AG04450 (cell line): ENCODE measurements at regions of chr5 and their contacts with region 1.

Region 1: GRCh38 chr5:64214132-64214531 is 48.5 kb downstream of the RNF180 start:
- DNase-seq: no peak
- H3K4me3 ChIP-seq: no peak overlapping the region
- H3K27ac ChIP-seq: no peak overlapping the region
- H3K27me3 ChIP-seq: no peaks in the 10 kb centered on the region
- CTCF ChIP-seq: no peak

Region 2: GRCh38 chr5:64201996-64202395 is 12.1 kb before region 1 on chr5:
- CTCF ChIA-PET with region 1: no interaction called
- POLR2A ChIA-PET with region 1: no interaction called
- DNase-seq: no peak
- H3K4me3 ChIP-seq: no peak overlapping the region
- H3K27ac ChIP-seq: no peak overlapping the region
- H3K27me3 ChIP-seq: no peaks in the 10 kb centered on the region
- CTCF ChIP-seq: no peak

Region 3: DNA sequence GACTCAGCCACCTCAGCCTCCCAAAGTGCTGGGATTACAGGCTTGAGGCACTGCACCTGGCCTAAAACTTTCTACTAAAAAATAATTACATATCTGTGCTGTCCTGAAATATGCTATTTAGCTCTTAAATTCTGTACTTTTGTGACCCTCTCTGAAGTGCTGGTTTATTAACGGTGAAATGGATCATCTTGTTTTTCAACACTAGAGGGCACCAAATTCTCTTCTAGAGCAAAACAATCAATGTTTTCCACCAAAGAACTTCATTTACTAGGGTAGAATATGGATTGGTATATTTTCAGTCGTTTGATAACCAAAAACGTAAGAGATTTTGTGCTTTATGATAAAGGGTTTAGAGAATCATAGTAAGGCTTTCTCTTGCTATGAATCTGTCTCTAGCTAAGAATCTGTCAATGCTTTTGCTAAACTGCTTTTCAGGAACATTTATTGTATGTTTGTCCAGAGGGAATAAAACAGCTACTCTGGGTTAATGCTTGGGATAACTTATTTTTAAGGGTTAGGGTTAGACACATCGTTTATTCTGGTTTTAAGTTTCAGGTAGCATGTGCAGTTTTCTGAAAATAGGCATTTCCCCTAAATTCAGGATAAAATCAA is 15.1 kb after region 1 on chr5:
- CTCF ChIA-PET with region 1: interaction called, 31 read pairs
- POLR2A ChIA-PET with region 1: no interaction called
- DNase-seq: no peak
- H3K4me3 ChIP-seq: no peak overlapping the region
- H3K27ac ChIP-seq: no peak overlapping the region
- H3K27me3 ChIP-seq: no peaks in the 10 kb centered on the region
- CTCF ChIP-seq: peak; percentile 67

Region 4: GRCh38 chr5:64532212-64532611 is 318.1 kb after region 1 on chr5:
- CTCF ChIA-PET with region 1: no interaction called
- POLR2A ChIA-PET with region 1: no interaction called
- DNase-seq: no peak
- H3K4me3 ChIP-seq: no peak overlapping the region
- H3K27ac ChIP-seq: no peak overlapping the region
- H3K27me3 ChIP-seq: no peaks in the 10 kb centered on the region
- CTCF ChIP-seq: no peak